CD8-positive, alpha-beta T cell (primary cell): ENCODE measurements at regions of chr3 and their contacts with region 1.

Region 1: DNA sequence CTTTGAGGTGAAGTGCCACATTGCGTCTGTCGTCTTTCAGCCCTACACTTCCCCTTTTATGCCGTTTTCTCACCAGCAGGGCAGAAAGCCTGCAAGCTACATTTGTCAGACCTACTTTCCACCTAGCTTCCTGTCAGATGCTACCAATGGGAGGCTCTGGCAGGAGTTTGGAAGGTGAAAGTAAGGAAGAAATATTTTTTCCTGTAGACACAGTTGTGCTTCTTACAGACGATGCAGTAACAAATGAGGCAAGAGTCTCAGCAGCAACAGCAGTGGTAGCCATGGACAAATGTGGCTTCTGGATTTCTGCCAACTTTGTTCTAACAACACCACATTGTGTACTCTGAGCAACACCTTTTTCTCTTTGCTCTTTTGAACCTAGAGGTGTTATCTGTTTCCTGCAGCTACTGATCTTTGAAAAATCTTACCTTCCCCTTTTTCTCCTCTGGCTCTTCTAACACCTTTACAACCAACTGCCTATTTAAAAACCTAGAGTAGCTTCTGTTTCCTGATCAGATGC is 70.6 kb upstream of the STT3B start:
- DNase-seq: peak in 8 of 9 experiments; percentile 11 to 92 (median 58)
- ATAC-seq: peak; percentile 83
- H3K4me3 ChIP-seq: peak overlapping the region; percentile 16 to 33
- H3K4me3 Mint-ChIP-seq: peak overlapping the region; percentile 73
- H3K27ac ChIP-seq: peak overlapping the region; percentile 40 to 71
- H3K27ac Mint-ChIP-seq: peak overlapping the region; percentile 97
- H3K4me1 ChIP-seq: peaks cover 53% of the 10 kb centered on the region
- H3K4me1 Mint-ChIP-seq: peaks cover 66% of the 10 kb centered on the region
- H3K27me3 ChIP-seq: no peaks in the 10 kb centered on the region
- H3K27me3 Mint-ChIP-seq: no peaks in the 10 kb centered on the region
- CTCF ChIP-seq: no peak

Region 2: DNA sequence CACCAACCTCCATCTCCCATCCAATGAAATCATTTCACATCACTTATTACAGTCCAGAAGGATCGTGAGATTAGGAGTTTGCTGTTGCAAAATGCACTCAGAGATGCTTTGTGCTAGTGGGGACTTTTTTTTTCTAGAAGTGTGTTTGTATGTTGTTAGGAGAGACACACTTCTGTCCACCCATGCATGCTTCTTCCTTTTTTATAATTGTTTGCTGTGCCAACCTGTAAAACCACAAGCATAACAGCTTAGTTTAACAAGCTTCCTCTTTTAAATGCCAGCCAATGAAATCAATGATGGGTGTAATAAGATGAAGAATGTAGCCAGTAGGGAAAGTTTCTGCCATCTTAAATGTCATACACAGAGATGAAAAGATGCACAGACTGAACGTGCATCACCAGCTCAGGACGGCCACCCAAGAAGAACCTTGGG is 235.0 kb before region 1 on chr3:
- CTCF ChIA-PET with region 1: interaction called, 3 read pairs
- POLR2A ChIA-PET with region 1: interaction called, 7 read pairs
- intact Hi-C with region 1: loop called in 1 of 2 experiments (anchors 10 kb)
- DNase-seq: peak in 2 of 9 experiments; percentile 65 to 81
- ATAC-seq: peak; percentile 79
- H3K4me3 ChIP-seq: no peak overlapping the region
- H3K4me3 Mint-ChIP-seq: peak overlapping the region; percentile 35
- H3K27ac ChIP-seq: peak overlapping the region; percentile 52 to 76
- H3K27ac Mint-ChIP-seq: peak overlapping the region; percentile 91
- H3K4me1 ChIP-seq: peaks cover 88% of the 10 kb centered on the region
- H3K4me1 Mint-ChIP-seq: peaks cover 86% of the 10 kb centered on the region
- H3K27me3 ChIP-seq: no peaks in the 10 kb centered on the region
- H3K27me3 Mint-ChIP-seq: no peaks in the 10 kb centered on the region
- CTCF ChIP-seq: no peak

Region 3: GRCh38 chr3:31505371-31506048 is 43.4 kb after region 1 on chr3:
- CTCF ChIA-PET with region 1: interaction called, 3 read pairs
- POLR2A ChIA-PET with region 1: no interaction called
- intact Hi-C with region 1: loop called in 1 of 2 experiments (anchors 5 kb)
- DNase-seq: no peak
- ATAC-seq: no peak
- H3K4me3 ChIP-seq: no peak overlapping the region
- H3K4me3 Mint-ChIP-seq: no peak overlapping the region
- H3K27ac ChIP-seq: no peak overlapping the region
- H3K27ac Mint-ChIP-seq: no peak overlapping the region
- H3K4me1 ChIP-seq: peaks cover 29% of the 10 kb centered on the region
- H3K4me1 Mint-ChIP-seq: peaks cover 56% of the 10 kb centered on the region
- H3K27me3 ChIP-seq: no peaks in the 10 kb centered on the region
- H3K27me3 Mint-ChIP-seq: no peaks in the 10 kb centered on the region
- CTCF ChIP-seq: no peak

Region 4: GRCh38 chr3:31610700-31611275 is 148.7 kb after region 1 on chr3:
- CTCF ChIA-PET with region 1: no interaction called
- POLR2A ChIA-PET with region 1: no interaction called
- intact Hi-C with region 1: loop called in 1 of 2 experiments (anchors 10 kb)
- DNase-seq: peak in 2 of 9 experiments; percentile 16 to 38
- ATAC-seq: no peak
- H3K4me3 ChIP-seq: no peak overlapping the region
- H3K4me3 Mint-ChIP-seq: no peak overlapping the region
- H3K27ac ChIP-seq: no peak overlapping the region
- H3K27ac Mint-ChIP-seq: peak overlapping the region; percentile 1
- H3K4me1 ChIP-seq: no peaks in the 10 kb centered on the region
- H3K4me1 Mint-ChIP-seq: peaks cover 61% of the 10 kb centered on the region
- H3K27me3 ChIP-seq: no peaks in the 10 kb centered on the region
- H3K27me3 Mint-ChIP-seq: no peaks in the 10 kb centered on the region
- CTCF ChIP-seq: peak; percentile 40